Activated naive CD4-positive, alpha-beta T cell treated with anti-CD3 and anti-CD28 coated beads for 36 hours (primary cell): ENCODE measurements at regions of chr9 and their contacts with region 1.

Region 1: DNA sequence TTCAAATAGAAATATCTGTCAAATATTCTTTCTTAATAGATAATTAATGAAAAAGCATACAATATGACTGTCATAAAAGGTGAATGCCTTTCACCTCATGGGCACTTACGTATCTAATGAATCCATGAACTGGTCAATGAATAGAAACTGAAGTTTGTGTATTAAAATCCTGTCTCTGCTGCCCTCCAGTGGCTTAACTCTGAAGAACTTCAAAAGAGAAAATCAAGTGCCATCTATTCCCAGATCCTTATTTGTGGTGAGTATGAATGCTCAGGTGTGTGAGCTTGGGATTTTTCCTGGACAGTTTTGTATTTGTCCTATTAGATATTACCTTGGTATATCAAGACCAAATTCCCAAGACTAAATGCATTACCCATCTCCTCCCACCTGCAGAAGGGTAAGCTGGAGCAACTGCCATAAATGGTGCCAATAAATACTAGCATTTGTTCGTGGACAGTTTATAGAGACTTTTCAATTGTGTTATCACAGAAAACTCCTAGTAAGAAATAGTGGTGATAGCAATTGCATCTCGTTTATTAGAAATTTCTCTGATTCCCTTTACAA is 44.0 kb upstream of the SVEP1 start:
- DNase-seq: peak; percentile 32
- H3K4me3 Mint-ChIP-seq: no peak overlapping the region
- H3K27ac Mint-ChIP-seq: no peak overlapping the region
- H3K4me1 Mint-ChIP-seq: peaks cover 7% of the 10 kb centered on the region
- H3K27me3 Mint-ChIP-seq: peaks cover 2% of the 10 kb centered on the region

Region 2: DNA sequence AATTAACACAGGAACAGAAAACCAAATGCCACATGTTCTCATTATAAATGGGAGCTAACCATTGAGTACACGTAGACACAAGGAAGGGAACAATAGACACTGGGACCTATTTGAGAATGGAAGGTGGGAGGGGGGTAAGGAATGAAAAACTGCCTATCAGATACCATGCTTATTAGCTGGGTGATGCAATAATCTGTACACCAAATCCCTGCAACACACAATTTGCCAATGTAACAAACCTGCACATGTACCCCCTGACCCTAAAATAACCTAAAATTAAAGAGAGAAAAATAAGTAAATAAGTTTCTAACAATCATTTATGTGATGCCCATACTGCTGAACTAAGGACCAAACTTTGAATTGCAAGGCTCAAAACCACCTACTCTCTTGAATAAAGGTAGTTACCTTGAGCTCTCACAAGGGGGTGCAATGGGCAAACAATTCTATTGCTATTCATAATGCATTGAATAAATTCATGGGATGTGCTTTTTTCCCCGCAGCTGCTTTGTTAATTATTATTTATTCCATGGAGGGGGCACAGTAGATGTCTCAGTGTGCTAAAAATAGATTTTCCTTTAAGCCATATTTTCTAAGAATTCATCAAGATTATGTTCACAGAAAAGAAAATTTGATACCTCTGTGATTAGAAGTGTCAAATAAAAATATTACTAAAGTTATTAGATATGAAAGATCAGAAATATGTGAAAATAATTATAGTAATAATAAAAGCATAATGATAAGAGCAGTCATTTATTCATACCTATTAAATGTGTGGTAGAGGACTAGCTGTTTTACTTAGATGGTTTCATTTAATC is 1049.3 kb before region 1 on chr9:
- CTCF ChIA-PET with region 1: interaction called, 3 read pairs
- intact Hi-C with region 1: loop called (anchors 1 kb)
- DNase-seq: peak; percentile 50
- H3K4me3 Mint-ChIP-seq: no peak overlapping the region
- H3K27ac Mint-ChIP-seq: no peak overlapping the region
- H3K4me1 Mint-ChIP-seq: no peaks in the 10 kb centered on the region
- H3K27me3 Mint-ChIP-seq: peaks cover 7% of the 10 kb centered on the region

Region 3: GRCh38 chr9:110058304-110058953 is 565.1 kb before region 1 on chr9:
- CTCF ChIA-PET with region 1: no interaction called
- intact Hi-C with region 1: loop called (anchors 10 kb)
- DNase-seq: peak; percentile 74
- H3K4me3 Mint-ChIP-seq: no peak overlapping the region
- H3K27ac Mint-ChIP-seq: no peak overlapping the region
- H3K4me1 Mint-ChIP-seq: peaks cover 9% of the 10 kb centered on the region
- H3K27me3 Mint-ChIP-seq: peaks cover 2% of the 10 kb centered on the region

Region 4: GRCh38 chr9:110183208-110184145 is 440.1 kb before region 1 on chr9:
- CTCF ChIA-PET with region 1: interaction called, 10 read pairs
- intact Hi-C with region 1: loop called (anchors 1 kb)
- DNase-seq: peak; percentile 82
- H3K4me3 Mint-ChIP-seq: no peak overlapping the region
- H3K27ac Mint-ChIP-seq: no peak overlapping the region
- H3K4me1 Mint-ChIP-seq: no peaks in the 10 kb centered on the region
- H3K27me3 Mint-ChIP-seq: no peaks in the 10 kb centered on the region

Region 5: DNA sequence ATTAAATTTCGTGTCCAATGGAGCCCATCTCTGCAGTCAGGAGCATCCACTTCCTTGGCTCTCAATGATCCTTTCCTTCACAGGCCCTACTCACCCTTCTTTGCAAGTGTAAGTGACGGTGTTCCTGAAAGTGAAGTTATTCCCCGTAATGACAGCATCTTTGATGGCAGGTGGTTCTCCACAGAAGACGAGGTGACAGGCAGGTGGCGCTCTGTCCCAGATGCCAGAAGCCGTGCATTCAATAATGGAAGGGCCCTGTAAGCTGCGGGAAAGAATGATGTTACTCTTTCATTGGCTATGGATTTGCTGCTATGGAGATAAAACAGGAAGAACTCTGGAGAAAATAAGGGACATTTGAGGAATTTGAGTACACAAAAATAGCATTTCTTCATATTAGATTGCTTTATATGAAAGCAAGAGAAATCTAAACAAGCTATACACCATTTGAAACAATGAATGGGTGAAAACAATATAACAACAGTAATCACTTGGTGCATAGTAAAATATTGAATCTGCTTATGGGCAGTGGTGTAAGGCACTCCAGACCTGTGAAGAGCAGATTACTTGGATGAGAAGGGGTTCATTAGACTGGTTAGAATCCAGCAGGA is 195.9 kb before region 1 on chr9:
- CTCF ChIA-PET with region 1: no interaction called
- intact Hi-C with region 1: loop called (anchors 2 kb)
- DNase-seq: peak; percentile 63
- H3K4me3 Mint-ChIP-seq: no peak overlapping the region
- H3K27ac Mint-ChIP-seq: no peak overlapping the region
- H3K4me1 Mint-ChIP-seq: no peaks in the 10 kb centered on the region
- H3K27me3 Mint-ChIP-seq: no peaks in the 10 kb centered on the region

Region 6: DNA sequence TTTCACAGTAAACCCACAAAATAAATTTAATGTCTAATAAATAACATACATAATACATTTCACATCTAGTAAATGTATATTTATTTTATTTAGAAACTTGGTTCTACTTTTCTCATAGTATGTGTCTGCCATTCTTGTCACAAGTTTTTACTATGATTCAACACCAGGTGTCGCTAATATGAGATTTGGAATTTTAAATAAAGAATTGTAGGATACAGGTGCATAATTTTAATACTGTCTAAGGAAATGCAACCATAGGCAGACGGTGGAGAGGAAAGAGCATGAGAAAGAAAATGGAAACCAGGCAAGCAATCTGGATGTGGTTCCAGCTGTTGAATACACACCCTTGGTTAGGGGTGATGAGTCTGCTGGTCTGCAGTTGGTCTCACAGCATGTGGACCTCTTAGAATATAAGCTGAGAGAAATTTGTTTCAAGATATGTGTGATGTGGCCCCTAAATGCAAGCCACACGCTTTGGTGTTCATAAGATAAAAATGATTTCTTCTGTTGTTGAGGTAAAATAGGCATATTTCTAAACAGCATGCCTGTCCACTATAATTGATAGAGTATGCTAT is 171.2 kb before region 1 on chr9:
- CTCF ChIA-PET with region 1: no interaction called
- intact Hi-C with region 1: loop called (anchors 1 kb)
- DNase-seq: no peak
- H3K4me3 Mint-ChIP-seq: no peak overlapping the region
- H3K27ac Mint-ChIP-seq: no peak overlapping the region
- H3K4me1 Mint-ChIP-seq: no peaks in the 10 kb centered on the region
- H3K27me3 Mint-ChIP-seq: peaks cover 7% of the 10 kb centered on the region